Left cardiac atrium (tissue), 4 donors: ENCODE measurements at regions of chr19 and their contacts with region 1.

Region 1: DNA sequence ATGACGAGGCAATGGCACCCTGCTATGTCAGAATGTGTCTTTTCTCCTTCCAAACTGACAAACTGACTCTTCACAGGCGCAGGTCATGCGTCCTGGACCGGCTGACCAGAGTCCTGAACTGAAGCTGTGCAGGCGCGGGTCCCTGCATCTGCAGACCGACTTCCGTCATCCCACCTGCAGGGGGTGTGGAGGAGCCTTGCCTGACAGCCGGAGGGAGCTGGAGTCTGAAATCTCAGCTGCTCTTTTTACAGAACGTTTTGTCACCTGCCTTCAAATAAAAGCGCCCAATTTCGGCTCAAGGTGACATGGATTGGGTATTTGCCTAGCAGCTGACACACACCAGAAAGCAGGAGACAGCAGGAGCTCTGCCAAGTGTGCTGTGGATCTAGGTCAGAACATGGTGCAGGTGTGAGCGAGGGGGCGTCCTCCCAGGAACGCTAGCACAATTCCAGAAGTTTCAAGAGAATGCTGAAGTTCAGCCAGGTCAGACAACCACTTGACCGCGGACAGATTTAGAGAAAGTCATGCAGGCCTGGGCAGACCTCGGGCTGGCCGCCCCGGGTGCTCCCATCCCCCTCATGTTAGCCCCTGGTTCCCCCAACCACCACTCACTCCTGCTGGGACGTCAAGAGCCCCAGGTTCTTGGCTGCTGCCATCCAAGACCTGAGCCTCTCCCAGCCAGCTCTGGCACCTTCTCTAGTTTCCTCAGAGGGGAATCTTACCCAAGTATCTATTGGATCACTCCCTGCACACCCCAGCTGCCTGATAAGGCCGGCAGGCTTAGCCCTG is 32.8 kb downstream of the ELL start:
- DNase-seq: no peak
- ATAC-seq: peak in 1 of 2 donors; percentile 20

Region 2: GRCh38 chr19:18388100-18388959 is 100.7 kb before region 1 on chr19:
- intact Hi-C with region 1: no loop called
- DNase-seq: peak; percentile 82
- ATAC-seq: peak; percentile 85 to 92

Region 3: GRCh38 chr19:18521885-18522624 is 33.0 kb after region 1 on chr19 and contains the start of gene ELL:
- intact Hi-C with region 1: loop called in 1 of 2 experiments (anchors 2 kb)
- DNase-seq: peak; percentile 100
- ATAC-seq: peak; percentile 92 to 93
- total RNA-seq, gene ELL: 10.8 to 18.7 TPM